ENCODE measurements at regions of chr7 and their contacts with region 1.

Region 1: DNA sequence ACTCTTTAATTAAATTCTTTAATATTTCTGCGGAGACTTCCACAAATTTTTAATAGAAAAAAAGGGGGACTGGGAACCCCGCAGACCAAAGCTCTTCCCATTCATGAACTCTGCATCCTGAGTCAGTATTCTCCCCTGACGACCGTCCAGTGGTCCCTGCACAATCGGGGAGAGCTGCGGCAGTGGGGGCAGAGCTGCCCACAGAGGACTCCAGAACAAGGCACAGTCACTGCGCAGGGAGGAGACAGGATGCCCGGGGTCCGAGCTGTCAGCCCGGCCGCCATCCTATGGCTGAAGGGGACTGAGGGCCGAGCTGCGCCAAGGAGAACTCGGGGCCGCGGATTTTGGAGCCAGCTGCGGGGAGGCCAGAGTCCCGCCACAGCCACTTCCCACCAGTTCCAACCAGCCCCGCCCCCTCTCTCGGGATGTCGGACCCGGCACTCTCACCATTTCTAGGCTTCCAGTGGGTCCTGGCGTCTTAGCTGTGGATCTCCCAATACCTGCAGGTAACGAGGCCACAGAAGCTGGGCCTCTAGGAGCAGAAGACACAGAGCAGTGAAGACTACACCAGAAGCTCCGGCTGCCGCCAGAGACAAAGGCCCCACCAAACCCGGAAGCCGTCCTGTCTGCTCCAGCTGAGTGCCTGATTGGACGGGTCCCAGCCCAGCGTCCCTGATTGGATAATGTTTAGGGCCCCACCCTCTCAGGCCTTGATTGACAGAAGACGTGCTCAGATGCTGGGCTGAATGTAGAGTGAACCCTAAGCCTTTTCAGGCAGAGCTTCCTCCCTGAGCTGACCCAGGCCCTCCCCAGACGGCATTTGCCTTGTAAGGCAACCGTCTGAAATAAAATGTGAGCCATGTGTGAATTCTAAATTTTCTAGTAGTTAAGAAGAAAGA is at the start of gene ERV3-1:
- DNase-seq: peak; percentile 77
- ATAC-seq: peak; percentile 99
- H3K4me3 Mint-ChIP-seq: peak within 1 kb of the TSS; percentile 98
- H3K27ac Mint-ChIP-seq: peak within 1 kb of the TSS; percentile 95
- H3K4me1 Mint-ChIP-seq: peaks cover 46% of the 10 kb centered on the region
- H3K27me3 Mint-ChIP-seq: no peaks in the 10 kb centered on the region
- CTCF ChIP-seq: no peak
- total RNA-seq, gene ERV3-1: 23.2 and 24.8 TPM in 2 replicates

Region 2: DNA sequence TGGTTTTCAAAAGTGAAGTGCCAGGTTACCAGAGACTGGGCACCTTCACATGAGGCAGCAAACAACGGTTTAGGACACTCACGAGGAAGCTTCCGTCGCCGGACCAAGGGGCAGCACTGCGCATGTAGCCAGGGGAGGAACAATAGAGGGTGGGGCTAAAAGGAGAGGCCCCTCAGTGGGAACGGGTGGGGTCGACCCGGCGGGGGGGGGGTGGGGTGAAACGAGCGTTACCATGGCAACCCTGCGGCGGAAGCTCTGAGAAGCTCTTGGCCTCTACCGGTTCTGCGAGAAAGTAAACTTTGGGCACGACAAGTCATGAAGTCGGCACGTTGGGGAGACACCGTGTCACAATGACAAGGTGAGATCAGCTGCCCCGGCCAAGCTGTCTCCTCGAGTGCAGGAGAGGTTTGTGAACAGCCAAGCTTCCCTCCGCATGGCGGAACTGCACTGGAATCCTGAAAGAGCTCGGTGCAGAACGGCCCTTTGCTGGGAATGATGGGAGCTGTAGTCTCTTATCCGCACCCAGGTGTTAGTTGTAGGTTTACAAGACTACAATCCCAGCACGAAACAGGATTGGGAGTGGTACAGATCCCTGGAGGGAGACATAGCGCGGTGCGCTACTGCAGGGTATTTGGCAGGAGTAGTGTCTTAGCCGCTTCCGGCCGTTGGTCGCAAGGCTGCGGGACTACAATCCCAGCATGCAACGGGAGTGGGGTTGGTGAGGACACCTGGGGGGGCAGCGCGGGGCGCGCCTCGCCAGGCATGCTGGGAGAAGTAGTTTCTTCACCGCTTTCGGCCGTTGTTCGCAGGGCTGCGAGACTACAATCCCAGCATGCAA is 1080.5 kb before region 1 on chr7:
- CTCF ChIA-PET with region 1: no interaction called
- POLR2A ChIA-PET with region 1: no interaction called
- intact Hi-C with region 1: loop called (anchors 1 kb)
- DNase-seq: peak; percentile 63
- ATAC-seq: peak; percentile 89
- H3K4me3 Mint-ChIP-seq: peak overlapping the region; percentile 90
- H3K27ac Mint-ChIP-seq: peak overlapping the region; percentile 93
- H3K4me1 Mint-ChIP-seq: peaks cover 4% of the 10 kb centered on the region
- H3K27me3 Mint-ChIP-seq: no peaks in the 10 kb centered on the region
- CTCF ChIP-seq: no peak

Region 3: GRCh38 chr7:64574540-64575126 is 431.7 kb before region 1 on chr7:
- CTCF ChIA-PET with region 1: no interaction called
- POLR2A ChIA-PET with region 1: no interaction called
- intact Hi-C with region 1: loop called (anchors 5 kb)
- DNase-seq: no peak
- ATAC-seq: no peak
- H3K4me3 Mint-ChIP-seq: peak overlapping the region; percentile 53
- H3K27ac Mint-ChIP-seq: no peak overlapping the region
- H3K4me1 Mint-ChIP-seq: peaks cover 5% of the 10 kb centered on the region
- H3K27me3 Mint-ChIP-seq: peaks cover 8% of the 10 kb centered on the region
- CTCF ChIP-seq: no peak

Region 4: GRCh38 chr7:64794171-64794844 is 212.0 kb before region 1 on chr7 and contains the start of gene ZNF138:
- CTCF ChIA-PET with region 1: no interaction called
- POLR2A ChIA-PET with region 1: interaction called, 15 read pairs
- intact Hi-C with region 1: loop called (anchors 1 kb)
- DNase-seq: peak; percentile 83
- ATAC-seq: peak; percentile 99
- H3K4me3 Mint-ChIP-seq: peak within 1 kb of the TSS; percentile 99
- H3K27ac Mint-ChIP-seq: peak within 1 kb of the TSS; percentile 98
- H3K4me1 Mint-ChIP-seq: peaks cover 27% of the 10 kb centered on the region
- H3K27me3 Mint-ChIP-seq: no peaks in the 10 kb centered on the region
- CTCF ChIP-seq: no peak
- total RNA-seq, gene ZNF138: 14.2 and 17.8 TPM in 2 replicates

Region 5: DNA sequence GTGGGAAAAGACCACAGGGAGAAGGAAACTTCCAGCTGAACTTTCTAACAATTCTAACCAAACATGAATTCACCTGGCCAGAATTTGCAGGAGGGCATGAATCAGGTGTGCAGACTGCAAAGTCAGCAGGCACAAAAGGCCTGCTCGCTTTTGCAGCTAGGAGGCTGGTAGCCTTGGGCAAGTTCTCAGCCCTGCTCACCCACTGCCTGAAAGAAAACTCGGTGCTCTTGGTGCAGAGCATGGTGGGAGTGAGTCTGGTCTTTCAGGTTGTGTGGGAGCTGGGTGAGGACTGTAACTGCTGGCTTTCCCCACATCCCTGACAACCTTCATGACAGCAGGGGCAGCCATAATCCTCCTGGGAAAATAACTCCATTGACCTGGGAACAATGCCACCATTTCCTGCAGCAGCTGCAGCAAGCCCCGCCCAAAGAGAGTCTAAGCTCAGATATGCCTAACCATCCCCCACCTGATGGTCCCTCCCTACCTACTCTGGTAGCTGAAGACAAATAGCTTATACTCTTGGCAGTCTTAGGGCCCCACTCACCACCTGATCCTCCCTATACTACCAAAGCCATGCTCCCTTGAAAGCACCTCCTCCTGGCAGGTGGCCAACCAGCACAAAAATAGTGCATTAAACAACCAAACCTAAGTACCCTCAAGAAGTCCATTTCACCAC is 47.1 kb before region 1 on chr7:
- CTCF ChIA-PET with region 1: no interaction called
- POLR2A ChIA-PET with region 1: no interaction called
- intact Hi-C with region 1: no loop called
- DNase-seq: no peak
- ATAC-seq: no peak
- H3K4me3 Mint-ChIP-seq: no peak overlapping the region
- H3K27ac Mint-ChIP-seq: no peak overlapping the region
- H3K4me1 Mint-ChIP-seq: no peaks in the 10 kb centered on the region
- H3K27me3 Mint-ChIP-seq: peaks cover 2% of the 10 kb centered on the region
- CTCF ChIP-seq: no peak

Region 6: GRCh38 chr7:65037740-65038678 is 31.7 kb after region 1 on chr7:
- CTCF ChIA-PET with region 1: no interaction called
- POLR2A ChIA-PET with region 1: interaction called, 27 read pairs
- intact Hi-C with region 1: loop called (anchors 1 kb)
- DNase-seq: peak; percentile 61
- ATAC-seq: peak; percentile 94
- H3K4me3 Mint-ChIP-seq: peak overlapping the region; percentile 75
- H3K27ac Mint-ChIP-seq: peak overlapping the region; percentile 65
- H3K4me1 Mint-ChIP-seq: peaks cover 8% of the 10 kb centered on the region
- H3K27me3 Mint-ChIP-seq: no peaks in the 10 kb centered on the region
- CTCF ChIP-seq: no peak

Region 7: DNA sequence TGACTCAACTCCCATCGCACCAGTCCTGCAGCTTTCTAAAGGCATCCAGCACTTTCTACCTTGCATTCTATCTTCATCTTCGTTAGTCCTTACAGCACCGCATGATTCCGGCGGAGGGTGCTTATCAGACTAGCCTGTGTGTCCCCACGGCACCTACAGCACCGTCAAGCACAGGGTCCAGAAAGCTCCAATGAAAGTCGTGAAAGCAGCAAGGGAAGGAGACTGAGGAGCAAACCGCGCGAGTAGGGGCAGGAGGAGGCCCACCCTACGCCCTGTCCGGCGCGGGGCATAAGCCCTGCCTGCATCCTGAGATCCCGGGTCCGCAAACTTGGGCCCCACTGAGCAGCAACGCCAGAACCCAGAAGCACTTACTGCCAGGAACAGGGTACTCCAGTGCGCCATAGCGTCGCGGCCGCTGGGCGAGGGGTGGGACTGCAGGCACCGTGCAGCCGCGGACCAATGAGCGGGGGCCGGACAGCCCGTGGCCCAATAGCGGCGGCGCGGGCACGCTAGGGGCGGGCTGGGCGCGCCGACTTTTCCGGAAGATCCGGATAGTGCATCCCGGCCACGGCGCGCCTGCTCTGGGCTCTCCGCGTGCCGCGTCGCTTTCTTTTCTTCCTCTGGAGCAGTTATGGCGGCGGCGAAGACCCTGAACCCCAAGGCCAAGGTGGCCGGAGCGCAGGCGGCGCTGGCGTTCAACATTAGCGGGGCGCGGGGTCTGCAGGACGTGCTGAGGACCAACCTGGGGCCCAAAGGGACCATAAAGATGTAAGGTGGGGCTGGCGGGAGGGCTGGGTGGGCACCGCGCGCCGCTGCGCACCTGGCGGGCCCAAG is 744.4 kb after region 1 on chr7:
- CTCF ChIA-PET with region 1: no interaction called
- POLR2A ChIA-PET with region 1: no interaction called
- intact Hi-C with region 1: loop called (anchors 5 kb)
- DNase-seq: peak; percentile 83
- ATAC-seq: peak; percentile 99
- H3K4me3 Mint-ChIP-seq: peak overlapping the region; percentile 96
- H3K27ac Mint-ChIP-seq: peak overlapping the region; percentile 94
- H3K4me1 Mint-ChIP-seq: peaks cover 15% of the 10 kb centered on the region
- H3K27me3 Mint-ChIP-seq: no peaks in the 10 kb centered on the region
- CTCF ChIP-seq: no peak

Measured in activated B cell treated with CpG ODN at 0.5 μM for 24 hours (primary cell).